Upper lobe of right lung (tissue), 1 donor: ENCODE measurements at regions of chr11 and their contacts with region 1.

Region 1: DNA sequence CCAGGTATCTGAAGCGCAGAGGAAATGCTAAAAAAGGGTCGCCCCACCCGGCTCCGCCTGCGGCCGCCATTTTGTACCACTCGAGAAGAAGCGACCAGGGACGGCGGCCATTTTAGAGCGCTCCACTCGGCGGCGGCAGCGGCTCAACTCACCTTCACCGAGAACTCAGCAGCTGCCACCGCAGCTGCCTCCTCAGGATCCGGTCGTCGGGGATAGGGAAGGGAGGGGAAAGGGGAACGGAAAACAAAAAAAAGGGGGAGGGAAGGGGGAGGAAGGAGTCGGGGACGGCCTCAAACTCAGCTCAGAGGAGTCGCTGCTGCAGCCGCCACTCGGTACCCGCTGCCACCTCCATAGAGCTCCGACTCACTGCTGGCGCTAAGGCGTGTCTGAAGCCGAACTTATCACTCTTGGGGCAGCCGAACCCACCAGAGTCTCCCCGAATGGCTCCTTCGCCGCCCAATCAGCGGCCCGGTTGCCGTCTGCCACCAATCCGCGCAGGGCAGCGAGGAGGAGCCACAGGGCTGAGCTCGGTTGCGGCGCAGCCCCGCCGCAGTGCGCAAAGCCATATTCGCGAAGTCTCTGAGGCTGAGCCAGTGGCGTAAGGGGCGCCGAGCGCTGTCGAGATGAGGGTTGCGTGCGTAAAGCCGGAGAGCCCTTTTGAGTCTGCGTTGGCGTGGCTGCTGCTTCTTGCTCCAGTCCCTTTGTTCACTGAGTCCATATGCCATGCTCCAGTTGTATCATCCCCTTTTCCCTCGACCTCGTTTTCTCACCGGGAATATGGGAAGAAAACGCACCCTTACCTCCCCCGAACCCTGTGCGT is at the start of gene EIF4G2:
- DNase-seq: peak; percentile 99
- ATAC-seq: peak; percentile 97
- H3K4me3 ChIP-seq: peak within 1 kb of the TSS; percentile 92
- H3K27ac ChIP-seq: peak within 1 kb of the TSS; percentile 99
- H3K4me1 ChIP-seq: peaks cover 37% of the 10 kb centered on the region
- H3K27me3 ChIP-seq: no peaks in the 10 kb centered on the region
- CTCF ChIP-seq: no peak
- total RNA-seq, gene EIF4G2: 801 TPM

Region 2: DNA sequence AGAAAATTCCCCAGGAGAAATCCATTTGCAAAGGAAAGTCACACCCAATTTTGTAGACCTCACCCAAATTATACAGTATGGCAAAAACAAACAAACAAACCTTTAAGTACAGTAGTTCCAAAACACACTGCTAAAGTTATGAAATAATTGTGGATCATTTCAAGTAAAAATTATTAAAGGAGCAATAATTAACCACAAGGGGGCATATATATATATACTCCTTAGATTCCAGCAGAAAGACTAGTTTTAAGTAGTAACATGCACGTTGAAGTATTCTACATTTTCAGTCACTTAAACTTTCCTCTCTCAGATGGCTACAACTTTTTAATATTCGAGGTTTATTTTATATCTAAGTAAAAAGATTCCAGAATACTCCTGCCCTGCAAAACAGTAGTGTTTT is 294.6 kb before region 1 on chr11:
- intact Hi-C with region 1: no loop called
- DNase-seq: no peak
- ATAC-seq: no peak
- H3K4me3 ChIP-seq: no peak overlapping the region
- H3K27ac ChIP-seq: no peak overlapping the region
- H3K4me1 ChIP-seq: peaks cover 6% of the 10 kb centered on the region
- H3K27me3 ChIP-seq: no peaks in the 10 kb centered on the region
- CTCF ChIP-seq: peak; percentile 46

Region 3: DNA sequence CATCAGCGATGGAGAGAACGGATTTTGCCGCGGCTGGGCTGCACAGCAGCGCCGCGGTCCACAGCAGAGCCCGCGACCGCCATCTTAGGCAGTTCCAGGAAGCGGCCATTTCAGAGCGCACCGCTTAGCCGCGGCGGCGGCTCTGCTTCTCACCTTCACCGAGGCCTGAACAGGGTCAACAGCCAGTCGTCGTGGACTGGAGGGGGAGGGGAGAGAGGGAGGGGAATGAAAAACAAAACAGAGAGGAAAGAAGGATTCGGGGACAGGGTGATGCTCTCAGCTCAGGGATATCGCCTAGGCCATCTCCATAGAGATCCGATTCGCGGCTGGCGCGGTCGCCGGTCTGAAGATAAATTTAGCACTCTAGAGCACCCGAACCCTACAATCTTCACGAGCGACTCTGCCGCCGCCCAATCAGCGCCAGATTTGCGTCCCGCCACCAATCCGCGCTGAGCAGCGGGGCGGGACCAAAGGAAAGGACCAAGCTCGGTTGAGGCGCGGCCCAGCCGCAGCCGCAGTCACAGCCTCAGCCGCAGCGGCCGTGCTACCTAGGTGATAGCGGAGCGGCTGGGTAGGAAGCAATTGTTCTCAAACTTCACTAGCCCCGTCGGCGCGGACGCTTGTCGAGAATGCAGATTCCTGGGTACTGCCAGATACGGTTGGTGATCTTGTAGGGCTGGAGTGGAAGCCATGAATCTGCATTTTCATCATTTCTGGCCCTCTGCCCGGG is 49.1 kb after region 1 on chr11 and contains the start of gene ZBED5:
- intact Hi-C with region 1: loop called (anchors 2 kb)
- DNase-seq: peak; percentile 99
- ATAC-seq: peak; percentile 98
- H3K4me3 ChIP-seq: peak within 1 kb of the TSS; percentile 83
- H3K27ac ChIP-seq: peak within 1 kb of the TSS; percentile 98
- H3K4me1 ChIP-seq: peaks cover 23% of the 10 kb centered on the region
- H3K27me3 ChIP-seq: no peaks in the 10 kb centered on the region
- CTCF ChIP-seq: peak; percentile 34
- total RNA-seq, gene ZBED5: 37.6 TPM